PC-3 (cell line): ENCODE measurements at regions of chr12 and their contacts with region 1.

Region 1: DNA sequence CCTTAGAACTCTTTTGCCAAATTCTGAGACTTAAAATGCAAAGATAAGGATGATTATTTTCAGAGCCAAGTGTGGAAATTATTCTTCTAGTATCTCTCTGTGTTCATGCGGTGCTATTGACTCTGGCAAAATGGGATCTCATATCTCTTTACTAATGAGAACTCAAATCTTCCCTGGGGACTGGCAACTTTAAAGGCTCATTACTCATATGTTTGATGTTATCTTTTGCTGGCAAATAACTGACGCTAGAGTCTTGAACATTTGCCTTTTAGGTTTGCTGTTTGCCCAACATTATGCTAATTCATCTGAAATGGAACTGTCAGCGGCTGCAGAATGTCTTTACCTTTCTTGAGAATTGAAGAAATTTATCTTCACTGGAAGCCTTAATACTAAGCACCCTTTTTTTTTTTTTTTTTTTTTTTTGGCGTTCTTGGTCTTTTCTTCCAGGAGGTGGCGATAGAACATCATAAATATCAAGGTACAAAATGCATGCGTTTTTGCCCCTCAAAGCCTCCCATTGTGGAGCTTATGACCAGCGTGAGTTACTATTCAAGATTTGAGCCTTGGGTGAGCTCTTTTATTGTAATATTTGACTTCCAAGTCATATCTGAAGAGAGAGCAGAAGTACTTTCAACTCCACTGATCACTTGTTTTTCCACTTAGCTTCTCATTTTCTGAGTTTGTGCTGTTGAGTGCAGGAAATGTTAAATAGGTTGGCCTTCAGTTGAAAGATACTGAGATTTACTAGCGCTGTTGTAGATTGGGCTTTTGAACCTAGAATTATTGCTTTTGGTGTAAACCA is 86.6 kb downstream of the CAND1 start:
- DNase-seq: peak; percentile 70
- ATAC-seq: peak; percentile 56
- H3K4me3 ChIP-seq: no peak overlapping the region
- H3K27ac ChIP-seq: no peak overlapping the region
- H3K4me1 ChIP-seq: peaks cover 5% of the 10 kb centered on the region
- H3K27me3 ChIP-seq: no peaks in the 10 kb centered on the region
- CTCF ChIP-seq: peak; percentile 87

Region 2: GRCh38 chr12:66279123-66279712 is 1076.6 kb before region 1 on chr12:
- CTCF ChIA-PET with region 1: no interaction called
- POLR2A ChIA-PET with region 1: no interaction called
- intact Hi-C with region 1: no loop called
- DNase-seq: peak; percentile 41
- ATAC-seq: no peak
- H3K4me3 ChIP-seq: no peak overlapping the region
- H3K27ac ChIP-seq: no peak overlapping the region
- H3K4me1 ChIP-seq: no peaks in the 10 kb centered on the region
- H3K27me3 ChIP-seq: peaks cover 23% of the 10 kb centered on the region
- CTCF ChIP-seq: peak; percentile 80

Region 3: DNA sequence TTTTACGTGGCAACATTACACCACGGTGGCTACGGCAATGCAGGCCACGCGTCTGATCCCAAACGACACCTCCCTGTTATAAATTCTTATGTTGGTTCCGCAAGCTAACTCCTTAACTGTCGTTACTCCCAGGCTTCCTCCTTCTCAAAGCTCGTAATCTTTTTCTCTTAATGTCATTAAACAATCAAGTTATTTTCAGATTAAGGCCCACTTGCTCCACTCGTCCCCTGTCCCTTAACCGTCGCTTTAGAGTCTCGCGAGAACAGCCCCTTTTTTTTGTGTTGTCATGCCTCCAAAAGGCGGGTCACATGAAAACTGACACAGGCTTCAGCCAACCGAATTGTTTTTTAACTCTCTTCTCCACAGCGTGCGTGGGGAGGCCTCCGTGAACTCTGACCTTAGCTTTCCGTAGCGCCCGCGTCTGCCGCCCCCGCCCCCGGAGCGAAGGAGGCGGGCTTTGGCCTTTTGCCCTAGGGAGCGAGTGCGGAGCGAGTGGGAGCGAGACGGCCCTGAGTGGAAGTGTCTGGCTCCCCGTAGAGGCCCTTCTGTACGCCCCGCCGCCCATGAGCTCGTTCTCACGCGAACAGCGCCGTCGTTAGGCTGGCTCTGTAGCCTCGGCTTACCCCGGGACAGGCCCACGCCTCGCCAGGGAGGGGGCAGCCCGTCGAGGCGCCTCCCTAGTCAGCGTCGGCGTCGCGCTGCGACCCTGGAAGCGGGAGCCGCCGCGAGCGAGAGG is 86.7 kb before region 1 on chr12 and contains the start of gene CAND1:
- CTCF ChIA-PET with region 1: interaction called, 13 read pairs
- POLR2A ChIA-PET with region 1: no interaction called
- intact Hi-C with region 1: no loop called
- DNase-seq: peak; percentile 98
- ATAC-seq: peak; percentile 78
- H3K4me3 ChIP-seq: peak within 1 kb of the TSS; percentile 88
- H3K27ac ChIP-seq: peak within 1 kb of the TSS; percentile 90
- H3K4me1 ChIP-seq: peaks cover 22% of the 10 kb centered on the region
- H3K27me3 ChIP-seq: no peaks in the 10 kb centered on the region
- CTCF ChIP-seq: no peak
- total RNA-seq, gene CAND1: 124 and 129 TPM in 2 replicates

Region 4: GRCh38 chr12:67288561-67288960 is 67.2 kb before region 1 on chr12:
- CTCF ChIA-PET with region 1: interaction called, 14 read pairs
- POLR2A ChIA-PET with region 1: no interaction called
- intact Hi-C with region 1: no loop called
- DNase-seq: no peak
- ATAC-seq: no peak
- H3K4me3 ChIP-seq: no peak overlapping the region
- H3K27ac ChIP-seq: no peak overlapping the region
- H3K4me1 ChIP-seq: no peaks in the 10 kb centered on the region
- H3K27me3 ChIP-seq: no peaks in the 10 kb centered on the region
- CTCF ChIP-seq: no peak

Region 5: GRCh38 chr12:67415473-67415872 is 59.7 kb after region 1 on chr12:
- CTCF ChIA-PET with region 1: interaction called, 3 read pairs
- POLR2A ChIA-PET with region 1: no interaction called
- intact Hi-C with region 1: loop called (anchors 1 kb)
- DNase-seq: peak; percentile 55
- ATAC-seq: peak; percentile 62
- H3K4me3 ChIP-seq: no peak overlapping the region
- H3K27ac ChIP-seq: no peak overlapping the region
- H3K4me1 ChIP-seq: peaks cover 10% of the 10 kb centered on the region
- H3K27me3 ChIP-seq: no peaks in the 10 kb centered on the region
- CTCF ChIP-seq: peak; percentile 70

Region 6: DNA sequence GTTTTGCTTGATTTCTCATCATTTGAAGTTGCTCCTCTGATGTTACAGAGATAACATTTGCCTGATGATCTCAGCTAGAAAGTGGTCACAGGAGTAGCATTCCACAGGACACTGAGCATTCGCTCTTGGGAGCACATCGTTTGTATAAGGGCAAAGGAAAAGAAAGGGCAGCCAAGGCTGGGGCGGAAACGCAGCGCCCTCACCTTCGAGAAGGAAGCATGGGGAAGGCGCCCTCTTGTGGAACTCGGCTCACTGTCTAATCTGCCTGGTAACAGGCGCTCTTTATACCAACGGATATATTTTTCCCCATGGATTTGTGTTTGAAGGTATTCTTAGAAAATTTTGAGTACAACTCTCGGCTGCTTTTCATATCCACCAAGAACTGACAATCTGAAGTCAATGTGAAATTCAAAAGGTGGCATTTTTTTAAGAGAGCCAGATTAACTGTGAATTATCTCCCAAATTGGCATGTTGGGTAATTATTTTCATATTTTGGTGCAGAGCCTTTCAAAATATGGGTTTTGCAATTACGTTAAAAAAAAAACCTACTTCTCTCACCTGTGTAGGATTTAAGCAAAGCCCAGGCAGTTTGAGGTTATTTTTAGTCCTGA is 86.1 kb after region 1 on chr12:
- CTCF ChIA-PET with region 1: interaction called, 6 read pairs
- POLR2A ChIA-PET with region 1: no interaction called
- intact Hi-C with region 1: loop called (anchors 1 kb)
- DNase-seq: peak; percentile 82
- ATAC-seq: peak; percentile 98
- H3K4me3 ChIP-seq: no peak overlapping the region
- H3K27ac ChIP-seq: no peak overlapping the region
- H3K4me1 ChIP-seq: peaks cover 9% of the 10 kb centered on the region; the same call in 1 of the 2 replicates
- H3K27me3 ChIP-seq: no peaks in the 10 kb centered on the region
- CTCF ChIP-seq: peak; percentile 89

Region 7: GRCh38 chr12:68031881-68032739 is 676.3 kb after region 1 on chr12:
- CTCF ChIA-PET with region 1: no interaction called
- POLR2A ChIA-PET with region 1: no interaction called
- intact Hi-C with region 1: loop called (anchors 10 kb)
- DNase-seq: no peak
- ATAC-seq: no peak
- H3K4me3 ChIP-seq: no peak overlapping the region
- H3K27ac ChIP-seq: no peak overlapping the region
- H3K4me1 ChIP-seq: no peaks in the 10 kb centered on the region
- H3K27me3 ChIP-seq: peaks cover 7% of the 10 kb centered on the region; the same call in 1 of the 2 replicates
- CTCF ChIP-seq: no peak